Dendritic cell treated with granulocyte-macrophage colony-stimulating factor and Interleukin-4, amounts not matched to agents 40 ng/mL and 50 ng/mL, for 4 days (primary cell): ENCODE measurements at regions of chr2 and their contacts with region 1.

Region 1: DNA sequence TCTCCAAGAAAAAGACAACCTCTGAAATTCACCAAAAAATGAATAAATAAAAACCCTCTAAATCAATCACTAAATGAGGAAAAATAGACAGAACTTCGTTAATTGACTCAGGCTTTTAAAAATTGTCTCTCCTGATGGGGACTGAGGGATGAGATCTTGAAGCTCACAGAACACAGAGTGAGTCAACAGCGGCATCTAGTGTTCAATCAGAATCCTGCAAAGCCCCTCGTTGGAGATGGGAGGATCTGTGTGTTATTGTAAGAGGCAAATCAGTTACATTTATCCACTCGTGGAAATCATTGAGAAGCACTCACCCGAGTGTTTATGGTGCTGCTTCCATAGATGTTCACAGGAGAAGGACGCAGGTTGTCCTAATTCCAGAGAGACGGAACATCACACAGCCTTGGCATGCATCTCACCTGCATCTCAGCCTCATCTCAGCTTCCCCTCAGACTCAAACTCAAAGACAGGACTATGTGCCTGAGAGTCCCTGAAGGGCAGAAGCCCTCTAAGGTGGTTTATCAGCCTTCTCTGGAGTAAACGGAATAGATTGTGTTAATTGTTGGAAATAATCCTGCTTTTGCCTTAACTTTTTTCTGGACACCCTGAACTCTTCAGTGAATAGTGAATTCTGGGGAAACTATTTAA is 82.0 kb downstream of the MREG start:
- H3K4me3 Mint-ChIP-seq: no peak overlapping the region
- H3K27ac Mint-ChIP-seq: no peak overlapping the region
- H3K4me1 Mint-ChIP-seq: peaks cover 19% of the 10 kb centered on the region
- H3K27me3 Mint-ChIP-seq: peaks cover 2% of the 10 kb centered on the region

Region 2: GRCh38 chr2:213934560-213934959 is 1996.8 kb before region 1 on chr2:
- intact Hi-C with region 1: loop called (anchors 10 kb)
- H3K4me3 Mint-ChIP-seq: no peak overlapping the region
- H3K27ac Mint-ChIP-seq: no peak overlapping the region
- H3K4me1 Mint-ChIP-seq: no peaks in the 10 kb centered on the region
- H3K27me3 Mint-ChIP-seq: no peaks in the 10 kb centered on the region

Region 3: DNA sequence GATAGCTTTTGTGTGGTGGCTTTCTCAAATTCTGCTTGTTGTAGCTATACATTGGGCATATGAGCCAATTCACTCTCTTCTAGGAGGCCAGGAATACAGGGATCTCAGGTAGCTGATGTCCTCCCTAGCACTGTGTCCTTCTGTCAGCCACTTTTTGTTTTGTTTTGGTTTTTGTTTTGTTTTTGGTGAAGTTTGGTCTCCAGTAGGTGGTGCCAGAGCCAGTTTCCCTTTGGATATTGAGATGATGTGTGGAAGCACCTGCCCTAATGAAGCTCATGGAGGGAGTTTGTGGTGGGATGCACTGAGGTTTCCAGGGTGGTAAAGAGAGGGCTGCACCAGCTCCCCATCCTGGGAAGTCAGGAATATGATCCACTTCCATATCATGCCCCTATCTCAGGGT is 1621.1 kb before region 1 on chr2:
- intact Hi-C with region 1: loop called (anchors 5 kb)
- H3K4me3 Mint-ChIP-seq: no peak overlapping the region
- H3K27ac Mint-ChIP-seq: no peak overlapping the region
- H3K4me1 Mint-ChIP-seq: no peaks in the 10 kb centered on the region
- H3K27me3 Mint-ChIP-seq: no peaks in the 10 kb centered on the region

Region 4: GRCh38 chr2:215269397-215270119 is 661.8 kb before region 1 on chr2:
- intact Hi-C with region 1: loop called (anchors 5 kb)
- H3K4me3 Mint-ChIP-seq: no peak overlapping the region
- H3K27ac Mint-ChIP-seq: no peak overlapping the region
- H3K4me1 Mint-ChIP-seq: no peaks in the 10 kb centered on the region
- H3K27me3 Mint-ChIP-seq: no peaks in the 10 kb centered on the region